ENCODE measurements at regions of chr15 and their contacts with region 1.

Region 1: DNA sequence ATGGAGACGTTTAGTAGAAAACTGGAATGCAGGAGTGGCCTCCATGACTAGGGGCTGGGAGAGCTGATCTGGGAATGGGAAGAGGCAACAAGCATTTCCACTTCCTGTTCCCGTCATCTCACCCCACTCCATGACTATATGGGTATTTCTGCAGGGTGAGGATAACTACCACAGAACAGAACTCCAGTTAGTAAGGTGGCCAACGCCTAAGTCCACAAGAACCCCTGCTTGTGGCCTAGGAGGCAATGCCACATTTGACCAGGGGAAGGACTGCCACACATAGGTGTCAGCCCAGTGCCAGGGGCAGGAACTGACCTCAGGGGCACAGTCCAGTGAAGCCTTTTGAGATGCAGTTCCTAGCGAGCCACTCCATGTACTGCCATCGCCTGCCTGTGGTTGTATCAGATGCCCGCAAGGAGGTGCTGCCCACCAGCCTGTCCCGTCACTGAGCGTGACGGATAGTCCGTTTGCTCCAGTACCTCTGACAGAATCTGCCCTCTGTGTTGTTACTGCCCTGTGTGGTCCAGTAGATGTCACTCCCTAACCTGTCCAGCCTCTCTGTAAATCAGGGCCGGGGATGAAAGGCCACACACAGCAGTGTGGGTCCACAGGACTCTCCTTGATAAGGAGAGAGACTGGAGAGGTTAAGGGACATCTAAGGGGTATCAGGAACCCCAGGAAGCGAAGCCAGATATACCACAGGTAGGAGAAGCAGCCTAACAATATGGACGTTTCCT is 3.5 kb upstream of the MTFMT start:
- DNase-seq: no peak
- H3K4me3 ChIP-seq: no peak overlapping the region
- CTCF ChIP-seq: peak; percentile 83

Region 2: GRCh38 chr15:64792282-64792681 is 240.7 kb before region 1 on chr15:
- CTCF ChIA-PET with region 1: no interaction called
- POLR2A ChIA-PET with region 1: no interaction called
- DNase-seq: no peak
- H3K4me3 ChIP-seq: no peak overlapping the region
- CTCF ChIP-seq: no peak

Region 3: DNA sequence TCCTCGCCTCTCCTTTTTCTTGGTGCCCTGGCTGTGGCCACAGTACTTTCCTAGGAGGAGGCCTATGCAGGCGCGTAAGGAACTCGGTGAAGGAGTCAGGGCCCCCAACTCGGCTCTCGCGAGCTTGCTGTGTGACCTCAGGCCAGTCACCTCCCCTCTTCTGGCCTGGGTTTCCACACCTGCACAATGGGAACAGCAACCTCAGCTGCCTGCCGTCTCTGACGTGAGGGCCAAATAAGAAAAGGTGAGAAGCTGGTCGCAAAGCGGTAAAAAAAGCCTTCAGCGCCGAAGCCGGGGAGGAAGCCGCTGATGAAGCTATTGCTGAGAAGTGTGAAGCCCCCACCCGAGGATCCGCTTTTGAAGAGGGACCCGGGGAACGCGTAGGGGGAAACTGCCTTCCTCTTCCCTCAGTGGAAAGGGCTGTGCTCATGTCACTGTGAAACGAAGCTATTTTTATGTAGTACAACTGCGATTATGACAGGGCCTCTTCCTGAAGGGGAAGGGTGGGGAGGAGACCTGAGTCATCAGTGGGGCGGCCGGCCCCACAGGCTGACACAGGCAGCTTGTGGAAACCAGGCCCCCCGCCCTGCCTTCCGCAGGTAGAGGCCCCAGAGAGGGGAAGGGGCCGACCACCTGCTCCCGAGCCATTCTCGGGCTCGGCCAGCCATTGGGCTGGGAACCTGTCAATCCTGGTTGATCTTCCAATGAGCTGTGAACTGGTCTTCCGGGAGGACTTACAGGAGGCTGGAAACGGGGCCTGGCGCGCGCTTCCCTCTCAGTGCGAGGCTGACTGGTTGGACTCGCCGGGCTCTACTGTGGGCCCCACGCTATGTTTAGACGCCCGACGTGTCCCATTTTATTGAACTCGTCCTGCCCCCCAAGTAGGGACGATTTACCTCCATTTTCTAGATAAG is 139.2 kb before region 1 on chr15:
- CTCF ChIA-PET with region 1: no interaction called
- POLR2A ChIA-PET with region 1: no interaction called
- DNase-seq: peak; percentile 63
- H3K4me3 ChIP-seq: no peak overlapping the region
- CTCF ChIP-seq: no peak

Region 4: GRCh38 chr15:64930778-64931371 is 102.1 kb before region 1 on chr15:
- CTCF ChIA-PET with region 1: no interaction called
- POLR2A ChIA-PET with region 1: no interaction called
- DNase-seq: no peak
- H3K4me3 ChIP-seq: no peak overlapping the region
- CTCF ChIP-seq: no peak

Region 5: GRCh38 chr15:65049418-65049840 is 16.5 kb after region 1 on chr15:
- CTCF ChIA-PET with region 1: interaction called, 34 read pairs
- POLR2A ChIA-PET with region 1: no interaction called
- DNase-seq: peak; percentile 50
- H3K4me3 ChIP-seq: peak overlapping the region; percentile 47
- CTCF ChIP-seq: no peak

Region 6: GRCh38 chr15:65069179-65069578 is 36.2 kb after region 1 on chr15:
- CTCF ChIA-PET with region 1: interaction called, 20 read pairs
- POLR2A ChIA-PET with region 1: no interaction called
- DNase-seq: peak; percentile 47
- H3K4me3 ChIP-seq: no peak overlapping the region
- CTCF ChIP-seq: no peak

Region 7: DNA sequence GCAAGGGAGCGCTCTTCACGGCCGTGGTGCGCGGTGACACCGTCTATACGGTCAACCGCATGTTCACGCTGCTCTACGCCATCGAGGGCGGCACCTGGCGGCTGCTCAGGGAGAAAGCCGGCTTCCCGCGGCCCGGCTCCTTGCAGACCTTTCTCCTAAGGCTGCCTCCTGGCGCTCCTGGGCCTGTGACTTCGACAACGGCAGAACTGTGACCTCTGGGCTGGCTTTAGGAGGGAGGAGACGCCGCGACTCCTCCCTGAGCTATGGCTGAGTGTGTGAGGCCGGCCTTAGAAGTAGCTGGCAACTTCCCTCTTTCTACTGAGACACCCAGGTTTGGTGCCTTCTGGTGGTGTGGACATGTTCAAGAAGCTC is 45.0 kb after region 1 on chr15:
- CTCF ChIA-PET with region 1: interaction called, 81 read pairs
- POLR2A ChIA-PET with region 1: no interaction called
- DNase-seq: no peak
- H3K4me3 ChIP-seq: no peak overlapping the region
- CTCF ChIP-seq: peak; percentile 85

Region 8: DNA sequence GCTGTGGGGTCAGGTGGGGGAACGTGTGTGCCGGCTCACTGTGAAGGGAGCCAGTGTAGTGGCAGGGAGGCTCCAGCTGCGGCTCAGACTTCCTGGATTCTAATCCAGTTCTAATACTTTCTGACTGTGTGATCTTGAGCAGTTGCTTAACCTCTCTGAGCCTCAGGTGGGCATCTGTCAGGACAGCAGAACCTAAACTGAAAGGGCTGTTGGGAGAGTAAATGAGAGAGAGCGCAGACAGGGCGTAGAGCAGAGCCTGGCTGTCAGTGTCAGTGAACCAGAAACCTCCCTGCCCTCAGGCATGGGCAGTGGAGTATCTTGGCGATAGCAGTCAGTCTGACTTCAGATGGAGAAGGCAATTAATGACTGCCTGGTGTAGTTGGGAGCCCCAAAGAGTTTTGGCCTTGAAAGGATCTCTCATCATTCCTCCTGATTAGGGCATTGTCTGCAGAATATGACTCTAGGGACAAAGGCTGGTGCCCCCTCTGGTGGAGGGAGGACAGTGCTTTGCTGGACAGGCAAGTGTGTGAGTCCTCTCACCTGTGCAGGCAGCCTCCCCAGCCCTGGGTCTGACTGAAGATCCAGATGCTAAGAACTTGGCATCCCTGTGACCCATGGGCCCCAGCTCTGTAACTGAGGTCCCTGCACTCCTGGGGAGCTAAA is 53.2 kb after region 1 on chr15:
- CTCF ChIA-PET with region 1: interaction called, 81 read pairs
- POLR2A ChIA-PET with region 1: no interaction called
- DNase-seq: no peak
- H3K4me3 ChIP-seq: no peak overlapping the region
- CTCF ChIP-seq: peak; percentile 55

Region 9: GRCh38 chr15:65101411-65101890 is 68.5 kb after region 1 on chr15:
- CTCF ChIA-PET with region 1: interaction called, 38 read pairs
- POLR2A ChIA-PET with region 1: no interaction called
- DNase-seq: no peak
- H3K4me3 ChIP-seq: no peak overlapping the region
- CTCF ChIP-seq: peak; percentile 74

Measured in AG04449 (cell line).